ENCODE measurements at regions of chr5 and their contacts with region 1.

Region 1: DNA sequence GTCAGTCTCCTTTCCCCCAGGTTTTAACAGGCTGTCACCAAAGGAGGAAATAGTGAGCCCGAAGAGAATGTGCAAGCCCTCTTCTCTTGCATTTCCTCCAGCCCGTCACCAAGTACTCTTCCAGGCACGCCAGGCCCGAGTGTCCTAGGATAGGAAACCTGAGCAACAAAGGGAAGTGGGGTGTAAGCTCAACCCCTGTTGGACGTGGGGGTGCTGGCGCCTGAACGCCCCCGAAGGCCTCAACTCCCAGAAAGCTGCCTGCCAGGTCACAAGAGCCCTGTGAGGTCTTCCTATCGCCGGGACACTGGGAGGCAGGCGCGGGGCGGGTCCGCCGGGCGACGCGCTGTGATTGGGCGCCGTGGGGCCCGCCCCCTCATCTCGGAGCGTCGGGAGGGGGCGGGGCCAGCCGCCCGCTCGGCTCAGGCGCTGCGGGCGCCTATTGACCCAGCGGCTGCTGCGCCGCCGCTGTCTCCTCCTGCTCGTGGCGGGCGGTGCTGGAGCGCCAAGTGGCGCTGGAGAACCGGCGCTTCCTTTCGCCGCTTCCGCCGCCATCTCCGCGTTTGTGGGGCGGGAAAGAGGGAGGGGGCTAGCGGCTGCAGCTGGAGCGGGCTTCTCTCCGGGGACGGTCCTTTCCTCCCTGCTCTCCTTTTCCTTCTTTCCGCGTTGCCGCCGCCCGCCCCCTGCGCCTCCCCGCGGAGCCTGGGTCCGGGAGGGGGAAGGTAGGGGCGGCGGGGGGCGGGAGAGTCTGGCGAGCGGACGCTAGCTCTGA is 572 bp upstream of the MAN2A1 start:
- DNase-seq: peak; percentile 69 to 84 (median 78)
- ATAC-seq: peak; percentile 88
- H3K4me3 ChIP-seq: peak overlapping the region; percentile 94
- H3K4me3 Mint-ChIP-seq: peak overlapping the region; percentile 83 to 96 (median 92)
- H3K27ac ChIP-seq: peak overlapping the region; percentile 93
- H3K27ac Mint-ChIP-seq: peak overlapping the region; percentile 45 to 94 (median 90)
- H3K4me1 ChIP-seq: peaks cover 9 to 13% of the 10 kb centered on the region in 2 donors
- H3K4me1 Mint-ChIP-seq: peaks cover 14 to 36% (median 33%) of the 10 kb centered on the region in 7 donors
- H3K27me3 ChIP-seq: no peaks in the 10 kb centered on the region
- H3K27me3 Mint-ChIP-seq: peaks cover 0 to 3% (median 0%) of the 10 kb centered on the region in 5 donors

Region 2: DNA sequence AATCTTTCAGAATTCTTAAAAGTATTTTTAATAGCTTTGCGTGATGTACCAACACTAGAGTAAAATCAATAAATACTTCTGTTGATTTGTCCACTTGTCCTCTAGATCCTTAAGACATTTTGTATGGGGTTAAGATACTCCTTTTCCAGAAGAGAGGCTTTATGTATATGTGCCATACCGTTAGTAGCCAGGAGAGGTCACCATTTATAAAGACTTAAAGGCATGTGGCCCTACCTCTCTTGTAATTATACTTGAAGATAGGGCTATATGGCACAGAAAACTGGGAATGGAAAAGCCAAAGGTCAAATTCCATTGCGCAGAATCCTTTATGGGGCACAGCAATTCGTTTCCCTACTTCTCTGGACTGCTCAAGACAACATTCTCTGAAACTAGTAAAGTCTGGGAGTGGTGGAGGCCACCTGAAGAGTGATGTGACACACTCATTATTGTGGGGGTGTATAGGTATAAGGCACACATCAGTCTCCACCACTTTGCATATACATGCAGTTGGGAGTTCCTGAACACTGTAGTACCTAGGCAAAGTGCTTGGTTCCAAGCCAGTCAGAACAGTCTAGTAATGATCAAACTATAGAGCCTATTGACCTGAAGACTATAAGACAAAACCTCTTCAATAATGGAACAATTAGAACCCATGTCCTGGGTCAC is 1167.2 kb before region 1 on chr5:
- CTCF ChIA-PET with region 1: no interaction called
- POLR2A ChIA-PET with region 1: no interaction called
- intact Hi-C with region 1: loop called (anchors 2 kb)
- DNase-seq: peak in 5 of 9 donors; percentile 4 to 29 (median 16)
- ATAC-seq: peak; percentile 73
- H3K4me3 ChIP-seq: no peak overlapping the region
- H3K4me3 Mint-ChIP-seq: no peak overlapping the region
- H3K27ac ChIP-seq: no peak overlapping the region
- H3K27ac Mint-ChIP-seq: no peak overlapping the region
- H3K4me1 ChIP-seq: no peaks in the 10 kb centered on the region
- H3K4me1 Mint-ChIP-seq: peaks cover 0 to 3% (median 0%) of the 10 kb centered on the region in 7 donors
- H3K27me3 ChIP-seq: no peaks in the 10 kb centered on the region
- H3K27me3 Mint-ChIP-seq: peaks cover 0 to 21% (median 13%) of the 10 kb centered on the region in 5 donors

Region 3: GRCh38 chr5:109656829-109657228 is 32.3 kb before region 1 on chr5:
- CTCF ChIA-PET with region 1: interaction called, 3 read pairs
- POLR2A ChIA-PET with region 1: no interaction called
- intact Hi-C with region 1: loop called in 1 of 2 experiments (anchors 2 kb)
- DNase-seq: peak; percentile 5 to 68 (median 52)
- ATAC-seq: peak; percentile 89
- H3K4me3 ChIP-seq: no peak overlapping the region
- H3K4me3 Mint-ChIP-seq: peak overlapping the region in 7 of 10 donors; percentile 15 to 63 (median 33)
- H3K27ac ChIP-seq: no peak overlapping the region
- H3K27ac Mint-ChIP-seq: peak overlapping the region in 2 of 9 donors; percentile 37 to 54
- H3K4me1 ChIP-seq: peaks cover 4 to 14% of the 10 kb centered on the region in 2 donors
- H3K4me1 Mint-ChIP-seq: peaks cover 16 to 22% (median 17%) of the 10 kb centered on the region in 7 donors
- H3K27me3 ChIP-seq: no peaks in the 10 kb centered on the region
- H3K27me3 Mint-ChIP-seq: peaks cover 10 to 16% (median 12%) of the 10 kb centered on the region in 5 donors

Region 4: DNA sequence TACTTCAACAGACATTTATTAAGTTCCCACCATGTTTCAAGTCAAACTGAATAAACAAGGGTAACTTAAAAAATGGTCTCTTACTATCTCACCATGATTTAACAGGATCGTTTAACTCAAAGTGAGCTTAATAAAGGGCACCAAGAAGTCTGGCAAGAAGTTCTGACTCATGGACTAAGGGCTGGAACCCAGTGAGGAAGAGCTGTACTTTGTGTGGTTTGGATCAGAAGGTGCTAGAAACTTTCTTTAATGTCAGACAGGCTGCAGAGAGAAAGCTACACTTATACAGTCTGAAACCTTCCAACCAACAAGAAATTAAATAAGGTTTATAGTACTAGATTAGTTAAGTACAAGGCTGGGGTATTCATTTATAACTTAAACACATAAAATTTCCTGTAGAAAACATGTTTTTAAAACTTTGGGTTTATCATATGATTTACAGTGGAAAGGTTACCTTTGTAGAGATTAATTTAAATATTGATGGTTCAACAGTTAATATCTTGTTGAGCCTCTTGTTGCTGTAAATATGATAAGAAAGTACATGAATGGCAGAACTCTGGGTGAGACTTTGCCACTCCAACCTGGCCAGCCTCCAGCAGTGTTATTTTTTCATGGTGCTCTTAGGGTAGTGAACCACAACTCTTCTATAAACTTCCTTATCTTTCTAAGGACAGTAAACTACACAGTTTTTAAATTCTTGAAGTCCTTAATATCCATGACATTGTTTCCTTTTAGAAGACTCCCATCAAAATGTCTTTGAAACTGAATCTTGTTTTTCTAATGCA is 163.4 kb after region 1 on chr5:
- CTCF ChIA-PET with region 1: no interaction called
- POLR2A ChIA-PET with region 1: interaction called, 20 read pairs
- intact Hi-C with region 1: loop called (anchors 1 to 2 kb)
- DNase-seq: no peak
- ATAC-seq: no peak
- H3K4me3 ChIP-seq: no peak overlapping the region
- H3K4me3 Mint-ChIP-seq: peak overlapping the region in 8 of 10 donors; percentile 9 to 75 (median 23)
- H3K27ac ChIP-seq: no peak overlapping the region
- H3K27ac Mint-ChIP-seq: peak overlapping the region in 8 of 9 donors; percentile 63 to 97 (median 84)
- H3K4me1 ChIP-seq: peaks cover 61 to 71% of the 10 kb centered on the region in 2 donors
- H3K4me1 Mint-ChIP-seq: peaks cover 47 to 99% (median 91%) of the 10 kb centered on the region in 7 donors
- H3K27me3 ChIP-seq: no peaks in the 10 kb centered on the region
- H3K27me3 Mint-ChIP-seq: no peaks in the 10 kb centered on the region

Region 5: DNA sequence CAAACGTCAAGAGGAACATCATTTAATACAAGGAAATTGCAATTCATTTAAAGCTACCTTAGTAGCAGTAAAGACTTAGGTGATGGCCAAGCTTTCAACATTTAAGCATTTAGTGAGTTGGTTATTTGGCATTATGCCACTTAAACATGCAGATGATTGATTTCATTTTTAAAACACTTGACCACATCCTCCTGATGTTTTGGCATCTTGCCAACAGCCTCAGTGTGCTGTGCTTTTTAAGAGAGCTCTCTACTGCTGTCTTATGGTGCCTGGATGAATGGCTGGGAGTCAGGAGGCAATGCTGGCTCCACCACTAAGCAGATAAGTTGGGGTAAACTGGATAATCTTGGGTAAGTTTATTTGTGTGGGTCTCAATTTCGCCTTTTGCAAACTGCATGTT is 365.1 kb after region 1 on chr5:
- CTCF ChIA-PET with region 1: interaction called, 3 read pairs
- POLR2A ChIA-PET with region 1: interaction called, 16 read pairs
- intact Hi-C with region 1: loop called (anchors 1 kb)
- DNase-seq: peak; percentile 17 to 93 (median 85)
- ATAC-seq: peak; percentile 89
- H3K4me3 ChIP-seq: peak overlapping the region; percentile 6
- H3K4me3 Mint-ChIP-seq: peak overlapping the region; percentile 50 to 86 (median 65)
- H3K27ac ChIP-seq: peak overlapping the region; percentile 63
- H3K27ac Mint-ChIP-seq: peak overlapping the region; percentile 77 to 96 (median 90)
- H3K4me1 ChIP-seq: peaks cover 21 to 35% of the 10 kb centered on the region in 2 donors
- H3K4me1 Mint-ChIP-seq: peaks cover 10 to 50% (median 35%) of the 10 kb centered on the region in 7 donors
- H3K27me3 ChIP-seq: no peaks in the 10 kb centered on the region
- H3K27me3 Mint-ChIP-seq: no peaks in the 10 kb centered on the region

Region 6: DNA sequence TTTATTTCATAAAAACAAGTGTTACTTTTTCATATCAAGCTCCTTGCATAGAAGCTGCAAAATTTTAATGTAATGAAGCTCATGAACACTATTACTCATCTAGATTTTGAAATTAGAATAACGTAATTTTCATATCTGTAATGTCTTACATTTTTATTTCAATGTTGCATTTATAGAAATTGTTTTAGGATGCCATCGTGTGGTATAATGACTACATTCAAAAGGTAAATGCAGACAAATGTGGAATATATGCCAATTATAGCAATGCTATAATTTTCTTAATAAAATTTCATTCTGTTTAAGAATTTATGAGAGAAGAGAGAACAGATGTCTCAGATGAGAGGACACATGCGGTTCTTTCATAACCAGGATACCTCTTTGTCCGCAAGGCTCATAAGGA is 807.1 kb after region 1 on chr5:
- CTCF ChIA-PET with region 1: no interaction called
- POLR2A ChIA-PET with region 1: no interaction called
- intact Hi-C with region 1: loop called in 1 of 2 experiments (anchors 5 kb)
- DNase-seq: no peak
- ATAC-seq: no peak
- H3K4me3 ChIP-seq: no peak overlapping the region
- H3K4me3 Mint-ChIP-seq: no peak overlapping the region
- H3K27ac ChIP-seq: no peak overlapping the region
- H3K27ac Mint-ChIP-seq: no peak overlapping the region
- H3K4me1 ChIP-seq: no peaks in the 10 kb centered on the region
- H3K4me1 Mint-ChIP-seq: no peaks in the 10 kb centered on the region
- H3K27me3 ChIP-seq: no peaks in the 10 kb centered on the region
- H3K27me3 Mint-ChIP-seq: no peaks in the 10 kb centered on the region

Region 7: DNA sequence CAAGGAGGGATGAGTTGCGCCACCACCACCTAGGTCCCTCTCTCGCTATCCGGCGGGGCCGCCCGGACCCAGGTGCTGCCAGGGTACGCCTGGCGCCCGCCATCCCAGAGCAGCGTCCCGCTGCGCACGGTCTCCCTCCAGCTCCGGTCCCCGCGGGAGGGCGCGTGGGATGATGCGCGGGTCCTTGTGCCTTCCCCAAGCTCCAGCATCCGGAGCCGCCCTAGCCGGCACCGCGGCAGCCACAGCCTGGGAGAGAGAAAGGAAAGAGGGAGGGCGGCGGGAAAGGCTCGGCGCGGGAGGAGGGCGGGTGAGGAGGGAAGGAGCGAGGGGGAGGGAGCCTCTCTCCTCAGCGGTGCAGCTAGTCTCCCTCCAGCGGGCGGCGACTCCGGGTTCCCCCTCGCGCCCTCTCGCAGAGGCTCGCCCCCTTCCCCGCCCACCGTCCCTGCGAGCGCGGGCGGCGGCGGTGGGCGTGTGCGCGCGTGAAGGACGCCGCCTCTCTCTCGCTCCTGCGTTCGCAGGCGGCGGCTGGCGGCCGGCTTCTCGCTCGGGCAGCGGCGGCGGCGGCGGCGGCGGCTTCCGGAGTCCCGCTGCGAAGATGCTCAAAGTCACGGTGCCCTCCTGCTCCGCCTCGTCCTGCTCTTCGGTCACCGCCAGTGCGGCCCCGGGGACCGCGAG is 1534.9 kb after region 1 on chr5 and contains the start of gene CAMK4:
- CTCF ChIA-PET with region 1: no interaction called
- POLR2A ChIA-PET with region 1: no interaction called
- intact Hi-C with region 1: loop called in 1 of 2 experiments (anchors 10 kb)
- DNase-seq: peak; percentile 74 to 87 (median 84)
- ATAC-seq: peak; percentile 95
- H3K4me3 ChIP-seq: peak within 1 kb of the TSS; percentile 81
- H3K4me3 Mint-ChIP-seq: peak within 1 kb of the TSS; percentile 79 to 99 (median 96)
- H3K27ac ChIP-seq: peak within 1 kb of the TSS; percentile 93
- H3K27ac Mint-ChIP-seq: peak within 1 kb of the TSS; percentile 89 to 99 (median 97)
- H3K4me1 ChIP-seq: peaks cover 17 to 25% of the 10 kb centered on the region in 2 donors
- H3K4me1 Mint-ChIP-seq: peaks cover 15 to 39% (median 26%) of the 10 kb centered on the region in 7 donors
- H3K27me3 ChIP-seq: no peaks in the 10 kb centered on the region
- H3K27me3 Mint-ChIP-seq: peaks cover 0 to 4% (median 0%) of the 10 kb centered on the region in 5 donors
- total RNA-seq, gene CAMK4: 118 to 366 (median 210) TPM

Measured in naive thymus-derived CD4-positive, alpha-beta T cell (primary cell).